Sigmoid colon (tissue), 7 donors: ENCODE measurements at regions of chr11 and their contacts with region 1.

Region 1: GRCh38 chr11:122655527-122656072 is at the start of gene UBASH3B:
- DNase-seq: peak; percentile 85
- H3K4me3 ChIP-seq: peak within 1 kb of the TSS; percentile 54 to 89 (median 80)
- H3K27ac ChIP-seq: peak within 1 kb of the TSS; percentile 82 to 97 (median 92)
- H3K4me1 ChIP-seq: peaks cover 0 to 30% (median 15%) of the 10 kb centered on the region in 4 donors
- H3K27me3 ChIP-seq: no peaks in the 10 kb centered on the region
- CTCF ChIP-seq: no peak
- EP300 ChIP-seq: no peak
- POLR2A ChIP-seq: no peak
- total RNA-seq, gene UBASH3B: 2.0 to 12.9 (median 2.2) TPM

Region 2: GRCh38 chr11:122578168-122578825 is 77.3 kb before region 1 on chr11:
- intact Hi-C with region 1: loop called (anchors 2 kb)
- DNase-seq: no peak
- H3K4me3 ChIP-seq: no peak overlapping the region
- H3K27ac ChIP-seq: no peak overlapping the region
- H3K4me1 ChIP-seq: peaks cover 0 to 5% (median 2%) of the 10 kb centered on the region in 4 donors
- H3K27me3 ChIP-seq: no peaks in the 10 kb centered on the region
- CTCF ChIP-seq: no peak
- EP300 ChIP-seq: no peak
- POLR2A ChIP-seq: no peak

Region 3: GRCh38 chr11:122727101-122727929 is 71.7 kb after region 1 on chr11:
- intact Hi-C with region 1: loop called (anchors 5 kb)
- DNase-seq: no peak
- H3K4me3 ChIP-seq: peak overlapping the region in 2 of 4 donors; percentile 9 to 22
- H3K27ac ChIP-seq: peak overlapping the region in 2 of 4 donors; percentile 26 to 39
- H3K4me1 ChIP-seq: peaks cover 0 to 18% (median 13%) of the 10 kb centered on the region in 4 donors
- H3K27me3 ChIP-seq: no peaks in the 10 kb centered on the region
- CTCF ChIP-seq: no peak
- EP300 ChIP-seq: no peak
- POLR2A ChIP-seq: no peak

Region 4: DNA sequence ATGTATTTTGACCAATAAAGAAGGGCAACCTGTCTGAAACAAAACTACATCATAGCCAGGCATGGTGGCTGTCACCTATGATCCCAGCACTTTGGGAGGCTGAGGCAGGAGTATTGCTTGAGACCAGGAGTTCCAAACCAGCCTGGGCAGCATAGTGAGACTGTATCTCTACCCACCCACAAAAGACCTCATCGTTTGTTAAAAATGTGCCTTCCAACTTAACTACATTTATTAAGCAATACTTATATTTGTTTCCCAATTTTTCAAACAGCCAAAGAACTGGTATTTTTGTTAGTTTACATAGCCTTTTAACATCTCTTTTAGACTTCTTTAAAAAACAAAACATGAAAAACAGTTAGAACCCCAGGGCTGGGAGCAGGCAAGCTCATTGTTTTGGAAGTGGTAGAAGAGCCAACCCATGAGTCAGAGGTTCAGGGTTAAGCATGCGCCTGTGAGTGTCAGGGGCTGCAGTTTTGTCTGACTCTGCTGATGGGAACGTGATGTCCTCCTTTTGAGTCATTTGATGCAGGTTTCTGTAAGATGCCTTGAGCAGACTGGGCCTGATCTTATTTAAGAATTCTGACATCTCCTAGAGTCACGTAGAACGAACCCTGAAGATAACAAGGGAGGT is 128.8 kb after region 1 on chr11:
- intact Hi-C with region 1: no loop called
- DNase-seq: peak; percentile 77
- H3K4me3 ChIP-seq: no peak overlapping the region
- H3K27ac ChIP-seq: peak overlapping the region in 2 of 4 donors; percentile 5 to 43
- H3K4me1 ChIP-seq: peaks cover 0 to 8% (median 6%) of the 10 kb centered on the region in 4 donors
- H3K27me3 ChIP-seq: no peaks in the 10 kb centered on the region
- CTCF ChIP-seq: no peak
- EP300 ChIP-seq: no peak
- POLR2A ChIP-seq: no peak

Region 5: GRCh38 chr11:123062158-123062891 is 406.7 kb after region 1 on chr11:
- intact Hi-C with region 1: loop called (anchors 10 kb)
- DNase-seq: peak; percentile 100
- H3K4me3 ChIP-seq: peak overlapping the region; percentile 72 to 95 (median 88)
- H3K27ac ChIP-seq: peak overlapping the region; percentile 98 to 100 (median 99)
- H3K4me1 ChIP-seq: peaks cover 0 to 70% (median 61%) of the 10 kb centered on the region in 4 donors
- H3K27me3 ChIP-seq: no peaks in the 10 kb centered on the region
- CTCF ChIP-seq: no peak
- EP300 ChIP-seq: peak in 2 of 4 donors; percentile 56 to 71
- POLR2A ChIP-seq: peak; percentile 39 to 44